ENCODE measurements at regions of chr1 and their contacts with region 1.

Region 1: DNA sequence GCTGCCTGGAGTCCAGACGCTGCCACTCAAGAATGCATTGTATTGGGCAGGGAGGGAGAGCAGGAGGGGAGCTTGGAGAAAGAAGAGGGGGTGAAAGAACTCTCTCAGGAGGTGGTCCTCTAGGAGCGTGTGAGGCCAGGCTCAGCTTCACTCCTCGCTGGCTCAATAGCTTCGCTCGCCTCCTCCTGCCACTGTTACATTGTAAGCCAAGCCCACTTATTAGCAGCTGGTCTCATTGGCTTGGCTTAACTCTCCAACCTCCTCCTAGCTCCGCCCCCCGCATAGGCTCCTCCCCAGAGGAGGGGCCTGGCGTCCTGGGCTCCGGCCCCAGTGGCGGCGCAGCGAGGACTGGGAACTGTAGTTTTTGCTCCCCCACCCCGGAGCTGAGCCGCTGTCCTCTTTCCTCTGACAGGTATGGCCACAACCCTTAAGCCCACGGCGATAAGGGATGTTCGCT is at the start of gene KCNN3:
- DNase-seq: peak; percentile 94
- total RNA-seq, gene KCNN3: 2.8 TPM

Region 2: DNA sequence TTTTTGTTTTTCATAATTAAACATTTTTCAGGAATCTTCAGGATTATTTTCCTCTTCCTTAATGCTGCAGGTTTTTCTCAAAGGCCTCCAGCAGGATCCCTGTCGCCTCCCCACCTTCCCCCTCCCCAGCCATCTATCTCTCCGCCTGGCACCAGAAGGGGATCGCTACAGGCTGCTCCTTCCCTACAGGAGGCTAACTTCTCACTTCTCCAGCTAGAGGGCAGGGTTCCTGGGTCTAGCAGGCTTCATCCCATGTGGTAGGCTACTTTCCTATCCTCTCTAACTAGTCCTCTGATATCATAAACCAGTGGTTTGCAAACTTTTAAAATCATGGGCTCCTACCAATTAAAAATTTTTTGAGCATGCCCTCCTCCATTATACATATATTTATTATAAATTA is 104.2 kb before region 1 on chr1:
- intact Hi-C with region 1: loop called (anchors 5 kb)
- DNase-seq: no peak

Region 3: DNA sequence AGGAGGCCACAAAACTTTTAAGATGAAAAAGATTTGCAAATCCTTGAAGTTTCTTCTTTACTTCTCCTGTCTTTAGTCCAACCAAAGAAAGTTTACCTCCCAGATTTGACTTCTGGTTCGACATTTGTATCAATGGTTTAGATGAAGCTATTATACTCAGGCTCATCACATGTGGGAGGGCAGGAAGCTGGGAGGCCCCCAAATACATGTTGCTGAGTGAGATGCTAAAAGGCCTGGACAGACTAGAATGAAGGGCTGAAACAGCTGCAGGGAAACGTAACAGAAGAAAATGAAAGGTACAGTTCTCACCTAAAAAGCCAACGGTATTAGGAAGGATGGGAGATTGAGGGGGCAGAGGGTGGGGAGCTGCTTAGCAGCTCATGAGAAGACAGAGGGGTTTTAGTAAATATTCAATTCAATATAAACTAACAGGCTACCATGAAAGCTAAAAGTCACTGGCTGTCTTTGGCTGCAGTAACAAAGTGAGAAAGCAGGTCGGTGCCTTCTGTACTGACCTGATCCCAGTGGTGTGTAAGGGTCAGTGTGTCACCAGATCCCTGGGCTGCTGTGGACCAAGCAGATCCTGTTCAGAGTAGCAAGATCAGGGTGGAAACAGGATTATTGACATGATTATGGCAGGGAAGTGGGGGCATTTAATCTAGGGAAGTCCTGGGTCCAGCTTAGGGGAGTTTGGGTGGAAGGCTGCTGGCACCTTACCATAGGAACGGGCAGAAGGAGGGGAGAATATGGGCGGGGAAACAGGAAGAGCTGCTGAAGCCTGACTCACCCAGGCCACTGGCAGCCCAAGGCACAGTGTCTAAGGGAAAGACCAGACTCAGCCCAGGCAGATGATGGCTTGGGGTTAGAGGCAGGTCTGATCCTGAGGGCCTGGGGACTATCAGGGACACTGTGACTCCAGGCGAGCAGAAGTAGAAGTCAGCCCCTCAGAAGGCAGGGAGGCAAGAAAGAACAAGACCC is 60.4 kb before region 1 on chr1:
- intact Hi-C with region 1: loop called (anchors 1 kb)
- DNase-seq: no peak

Measured in cardiac septum (tissue), 1 donor.